ENCODE measurements at regions of chr6 and their contacts with region 1.

Region 1: GRCh38 chr6:158649289-158650143 is at the start of gene SYTL3:
- DNase-seq: peak; percentile 82
- H3K4me3 Mint-ChIP-seq: peak within 1 kb of the TSS; percentile 73
- H3K27ac Mint-ChIP-seq: peak within 1 kb of the TSS; percentile 90
- H3K4me1 Mint-ChIP-seq: peaks cover 76% of the 10 kb centered on the region
- H3K27me3 Mint-ChIP-seq: no peaks in the 10 kb centered on the region
- total RNA-seq, gene SYTL3: 133 to 135 TPM

Region 2: DNA sequence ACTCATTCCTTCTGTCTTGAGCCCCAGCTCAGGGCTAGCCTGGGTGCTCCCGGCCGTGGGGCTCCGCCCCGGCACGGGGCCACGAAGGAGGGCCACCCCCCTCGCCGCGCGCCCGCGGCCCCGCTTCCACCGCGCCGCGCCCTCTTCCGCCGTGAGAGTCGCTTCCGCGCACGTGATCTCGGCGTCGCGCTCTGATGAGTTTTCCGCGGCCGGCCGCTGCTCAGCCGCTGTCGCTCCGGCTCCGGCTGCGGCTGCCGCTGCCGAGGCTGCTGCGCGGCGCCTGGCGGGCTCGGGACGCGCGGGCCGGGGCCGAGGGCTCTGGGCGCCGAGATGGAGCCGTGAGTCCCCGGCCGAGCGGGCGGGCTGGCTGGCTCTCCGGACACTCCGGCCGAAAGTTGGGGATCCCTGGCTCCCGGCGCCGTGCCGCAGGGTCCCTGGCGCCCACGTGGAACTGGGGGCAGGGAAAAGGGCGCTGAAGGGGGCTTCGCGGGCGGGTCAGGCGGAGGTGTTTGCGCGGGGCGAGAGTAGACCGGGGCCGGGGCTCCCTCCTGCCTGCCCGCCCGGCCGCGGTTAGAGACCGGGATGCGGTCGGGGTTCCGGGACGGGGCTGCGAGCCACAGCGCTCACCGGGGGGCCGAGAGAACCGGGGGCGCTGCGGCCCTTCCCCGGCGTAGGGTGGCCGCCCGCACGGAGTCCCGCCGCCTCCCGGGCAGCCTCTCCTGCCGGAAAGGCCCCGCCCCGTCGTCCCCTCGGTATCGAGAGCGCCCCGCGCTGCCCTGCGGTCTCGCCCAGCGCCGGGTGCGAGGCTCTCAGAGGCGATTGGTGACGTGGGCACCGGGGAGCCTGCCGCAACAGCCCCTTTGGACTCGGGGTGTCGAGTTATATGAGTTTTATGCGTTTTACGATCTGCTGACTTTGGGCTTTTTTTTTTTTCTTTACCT is 89.4 kb before region 1 on chr6 and contains the start of gene TMEM181:
- CTCF ChIA-PET with region 1: interaction called, 3 read pairs
- POLR2A ChIA-PET with region 1: interaction called, 19 read pairs
- DNase-seq: peak; percentile 90
- H3K4me3 Mint-ChIP-seq: peak within 1 kb of the TSS; percentile 98
- H3K27ac Mint-ChIP-seq: peak within 1 kb of the TSS; percentile 92
- H3K4me1 Mint-ChIP-seq: peaks cover 52% of the 10 kb centered on the region
- H3K27me3 Mint-ChIP-seq: peaks cover 5% of the 10 kb centered on the region
- total RNA-seq, gene TMEM181: 20.2 to 20.5 TPM